Caco-2 (cell line): ENCODE measurements at regions of chr12 and their contacts with region 1.

Region 1: GRCh38 chr12:54279866-54280467 is at the start of gene CBX5:
- DNase-seq: peak; percentile 98 to 99
- H3K4me3 ChIP-seq: peak within 1 kb of the TSS; percentile 80
- H3K4me3 Mint-ChIP-seq: no peak within 1 kb of the TSS
- H3K27ac Mint-ChIP-seq: no peak within 1 kb of the TSS
- H3K4me1 ChIP-seq: peaks cover 32% of the 10 kb centered on the region
- H3K4me1 Mint-ChIP-seq: peaks cover 12% of the 10 kb centered on the region
- H3K27me3 ChIP-seq: no peaks in the 10 kb centered on the region
- H3K27me3 Mint-ChIP-seq: no peaks in the 10 kb centered on the region
- CTCF ChIP-seq: no peak
- total RNA-seq, gene CBX5: 85.2 and 85.5 TPM in 2 replicates

Region 2: GRCh38 chr12:54251667-54252284 is 28.2 kb before region 1 on chr12:
- CTCF ChIA-PET with region 1: interaction called, 15 read pairs
- POLR2A ChIA-PET with region 1: interaction called, 18 read pairs
- intact Hi-C with region 1: loop called (anchors 1 kb)
- DNase-seq: peak in 1 of 2 experiments; percentile 37
- H3K4me3 ChIP-seq: no peak overlapping the region
- H3K4me3 Mint-ChIP-seq: no peak overlapping the region
- H3K27ac Mint-ChIP-seq: no peak overlapping the region
- H3K4me1 ChIP-seq: no peaks in the 10 kb centered on the region
- H3K4me1 Mint-ChIP-seq: no peaks in the 10 kb centered on the region
- H3K27me3 ChIP-seq: no peaks in the 10 kb centered on the region
- H3K27me3 Mint-ChIP-seq: no peaks in the 10 kb centered on the region
- CTCF ChIP-seq: peak; percentile 62 to 69

Region 3: GRCh38 chr12:54294152-54294952 is 14.4 kb after region 1 on chr12:
- CTCF ChIA-PET with region 1: interaction called, 3 read pairs
- POLR2A ChIA-PET with region 1: interaction called, 17 read pairs
- intact Hi-C with region 1: no loop called
- DNase-seq: peak; percentile 65 to 78
- H3K4me3 ChIP-seq: no peak overlapping the region
- H3K4me3 Mint-ChIP-seq: no peak overlapping the region
- H3K27ac Mint-ChIP-seq: no peak overlapping the region
- H3K4me1 ChIP-seq: 0 out of 2 replicates have a peak, but pooled peaks cover 7% of the 10 kb centered on the region
- H3K4me1 Mint-ChIP-seq: peaks cover 6% of the 10 kb centered on the region
- H3K27me3 ChIP-seq: no peaks in the 10 kb centered on the region
- H3K27me3 Mint-ChIP-seq: no peaks in the 10 kb centered on the region
- CTCF ChIP-seq: peak; percentile 83 to 88

Region 4: DNA sequence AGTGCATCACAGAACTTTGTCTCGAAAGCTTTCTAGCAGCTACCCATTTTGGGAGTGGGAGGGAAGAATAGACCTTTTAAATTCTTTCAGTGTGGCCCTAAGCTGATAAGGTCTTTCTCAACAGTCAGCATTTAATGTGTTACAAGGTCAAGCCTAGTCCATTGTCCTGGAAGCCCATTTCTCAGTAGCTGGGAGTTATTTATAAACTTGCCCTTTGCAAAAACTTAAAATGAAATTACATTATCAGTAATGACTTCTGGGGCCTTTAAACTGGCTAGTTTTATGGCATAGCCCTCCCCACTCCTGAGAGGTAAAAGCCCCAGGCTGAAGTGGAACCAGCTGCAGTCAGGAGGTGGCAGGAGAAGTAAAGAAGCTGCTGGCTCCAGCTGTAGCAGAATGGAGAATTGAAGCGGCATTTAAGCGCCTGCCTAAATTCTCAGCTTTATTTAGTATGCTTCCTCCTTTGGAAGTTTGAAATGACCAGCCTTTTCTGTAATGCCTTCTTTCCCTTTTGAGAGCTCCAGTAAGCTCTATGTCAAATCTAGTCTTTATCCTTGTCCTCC is 57.4 kb after region 1 on chr12:
- CTCF ChIA-PET with region 1: interaction called, 7 read pairs
- POLR2A ChIA-PET with region 1: interaction called, 15 read pairs
- intact Hi-C with region 1: loop called (anchors 1 kb)
- DNase-seq: peak in 1 of 2 experiments; percentile 55
- H3K4me3 ChIP-seq: no peak overlapping the region
- H3K4me3 Mint-ChIP-seq: no peak overlapping the region
- H3K27ac Mint-ChIP-seq: no peak overlapping the region
- H3K4me1 ChIP-seq: peaks cover 38% of the 10 kb centered on the region
- H3K4me1 Mint-ChIP-seq: peaks cover 31% of the 10 kb centered on the region
- H3K27me3 ChIP-seq: no peaks in the 10 kb centered on the region
- H3K27me3 Mint-ChIP-seq: no peaks in the 10 kb centered on the region
- CTCF ChIP-seq: peak in 1 of 2 experiments; percentile 6